ENCODE measurements at regions of chr9 and their contacts with region 1.

Region 1: DNA sequence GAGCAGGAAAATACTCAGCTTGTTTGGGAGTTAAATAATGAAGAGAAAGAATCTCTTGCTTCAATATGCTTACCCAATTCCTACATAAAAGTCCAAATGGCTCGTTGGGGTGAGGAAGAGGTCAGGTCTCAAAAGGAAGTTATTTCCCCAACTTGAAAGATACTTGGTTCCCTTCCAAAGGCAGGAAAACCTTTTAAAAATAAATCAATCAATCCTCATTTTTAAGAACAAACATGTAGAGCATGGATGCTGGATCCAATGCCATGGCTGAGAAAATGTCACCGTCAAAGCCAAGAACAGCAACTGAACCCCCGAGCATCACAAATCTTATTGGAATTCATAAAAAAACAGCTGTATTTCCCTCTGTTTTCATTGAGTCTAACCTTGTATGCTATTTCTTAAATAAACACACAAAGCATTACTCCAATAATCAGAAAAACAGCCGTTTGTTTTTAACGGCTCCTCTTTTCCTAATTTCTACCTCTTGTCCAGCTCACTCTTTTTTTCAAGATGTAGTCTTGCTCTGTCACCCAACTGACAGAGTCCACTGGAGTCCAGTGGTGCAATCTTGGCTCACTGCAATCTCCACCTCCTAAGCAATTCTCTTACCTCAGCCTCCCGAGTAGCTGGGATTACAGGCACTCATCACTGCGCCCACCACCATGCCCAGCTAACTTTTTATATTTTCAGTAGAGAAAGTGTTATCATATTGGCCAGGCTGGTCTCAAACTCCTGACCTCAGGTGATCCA is 140.7 kb downstream of the GNA14 start:
- DNase-seq: no peak
- ATAC-seq: peak in 3 of 4 donors; percentile 18 to 71 (median 57)
- H3K4me3 ChIP-seq: no peak overlapping the region
- H3K27ac ChIP-seq: peak overlapping the region in 9 of 12 donors; percentile 0 to 69 (median 37)
- H3K4me1 ChIP-seq: peaks cover 0 to 30% (median 4%) of the 10 kb centered on the region in 12 donors
- H3K27me3 ChIP-seq: no peaks in the 10 kb centered on the region
- CTCF ChIP-seq: no peak
- POLR2A ChIP-seq: no peak

Region 2: GRCh38 chr9:77926309-77926959 is 419.0 kb after region 1 on chr9:
- intact Hi-C with region 1: loop called in 1 of 10 experiments (anchors 10 kb)
- DNase-seq: no peak
- ATAC-seq: peak in 1 of 4 donors; percentile 36
- H3K4me3 ChIP-seq: no peak overlapping the region
- H3K27ac ChIP-seq: peak overlapping the region in 1 of 12 donors; percentile 33
- H3K4me1 ChIP-seq: peaks cover 0 to 38% (median 6%) of the 10 kb centered on the region in 12 donors
- H3K27me3 ChIP-seq: no peaks in the 10 kb centered on the region
- CTCF ChIP-seq: no peak
- POLR2A ChIP-seq: no peak

Measured in heart left ventricle (tissue), 16 donors.